SK-N-SH (cell line): ENCODE measurements at regions of chr3 and their contacts with region 1.

Region 1: GRCh38 chr3:14261229-14261628 is 82.6 kb downstream of the LSM3 start:
- DNase-seq: peak; percentile 88
- H3K4me3 ChIP-seq: peak overlapping the region in 1 of 2 experiments; percentile 42; a peak in 1 of 4 replicates
- H3K27ac ChIP-seq: no peak overlapping the region
- H3K4me1 ChIP-seq: no peaks in the 10 kb centered on the region
- H3K27me3 ChIP-seq: 0 out of 2 replicates have a peak, but pooled peaks cover 6% of the 10 kb centered on the region
- CTCF ChIP-seq: peak; percentile 98
- EP300 ChIP-seq: no peak
- RAD21 ChIP-seq: peak; percentile 99

Region 2: GRCh38 chr3:14274999-14275961 is 14.1 kb after region 1 on chr3:
- CTCF ChIA-PET with region 1: interaction called, 29 read pairs
- POLR2A ChIA-PET with region 1: no interaction called
- DNase-seq: peak; percentile 43
- H3K4me3 ChIP-seq: no peak overlapping the region; a peak in 1 of 4 replicates
- H3K27ac ChIP-seq: no peak overlapping the region
- H3K4me1 ChIP-seq: peaks cover 0 to 12% of the 10 kb centered on the region in 2 experiments; a peak in 2 of 4 replicates
- H3K27me3 ChIP-seq: 0 out of 2 replicates have a peak, but pooled peaks cover 3% of the 10 kb centered on the region
- CTCF ChIP-seq: peak; percentile 36
- EP300 ChIP-seq: no peak
- RAD21 ChIP-seq: peak; percentile 45

Region 3: DNA sequence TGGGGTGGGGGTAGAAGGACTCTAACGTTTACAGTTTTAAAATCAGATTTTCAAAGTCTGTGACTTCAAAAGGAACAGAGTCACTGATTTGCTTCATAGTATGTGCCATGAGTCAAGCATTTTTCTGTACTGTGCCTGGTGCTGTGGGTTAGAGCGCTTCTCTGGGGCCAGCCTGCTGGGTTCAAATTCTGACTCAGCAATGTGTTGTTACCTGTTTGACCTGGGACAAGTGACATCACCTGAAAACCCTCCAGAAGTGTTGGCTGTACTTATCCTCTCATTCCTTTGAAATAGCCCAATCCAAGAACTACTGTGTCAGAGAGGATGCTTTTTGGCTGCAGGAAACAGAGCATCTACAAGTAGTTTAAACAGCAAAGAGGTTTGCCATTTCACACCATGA is 19.1 kb after region 1 on chr3:
- CTCF ChIA-PET with region 1: interaction called, 29 read pairs
- POLR2A ChIA-PET with region 1: no interaction called
- DNase-seq: no peak
- H3K4me3 ChIP-seq: no peak overlapping the region
- H3K27ac ChIP-seq: no peak overlapping the region
- H3K4me1 ChIP-seq: peaks cover 0 to 12% of the 10 kb centered on the region in 2 experiments; a peak in 2 of 4 replicates
- H3K27me3 ChIP-seq: no peaks in the 10 kb centered on the region
- CTCF ChIP-seq: no peak
- EP300 ChIP-seq: no peak
- RAD21 ChIP-seq: no peak

Region 4: GRCh38 chr3:14307656-14308302 is 46.5 kb after region 1 on chr3:
- CTCF ChIA-PET with region 1: interaction called, 10 read pairs
- POLR2A ChIA-PET with region 1: no interaction called
- DNase-seq: no peak
- H3K4me3 ChIP-seq: no peak overlapping the region
- H3K27ac ChIP-seq: no peak overlapping the region
- H3K4me1 ChIP-seq: peaks cover 0 to 10% of the 10 kb centered on the region in 2 experiments; a peak in 1 of 4 replicates
- H3K27me3 ChIP-seq: peaks cover 7% of the 10 kb centered on the region
- CTCF ChIP-seq: no peak
- EP300 ChIP-seq: no peak
- RAD21 ChIP-seq: no peak

Region 5: GRCh38 chr3:14402304-14402811 is 141.1 kb after region 1 on chr3 and contains the start of gene SLC6A6:
- CTCF ChIA-PET with region 1: interaction called, 13 read pairs
- POLR2A ChIA-PET with region 1: no interaction called
- DNase-seq: peak; percentile 96
- H3K4me3 ChIP-seq: peak within 1 kb of the TSS; percentile 48 to 86
- H3K27ac ChIP-seq: peak within 1 kb of the TSS; percentile 84 to 91
- H3K4me1 ChIP-seq: peaks cover 13 to 24% of the 10 kb centered on the region in 2 experiments; a peak in 3 of 4 replicates
- H3K27me3 ChIP-seq: no peaks in the 10 kb centered on the region
- CTCF ChIP-seq: peak; percentile 42
- EP300 ChIP-seq: peak in 1 of 2 experiments; percentile 23; a peak in 1 of 4 replicates
- RAD21 ChIP-seq: peak; percentile 24; the same call in 1 of the 2 replicates
- polyA plus RNA-seq, gene SLC6A6: 19.1 and 22.0 TPM in 2 replicates

Region 6: GRCh38 chr3:14452679-14453367 is 191.6 kb after region 1 on chr3:
- CTCF ChIA-PET with region 1: interaction called, 51 read pairs
- POLR2A ChIA-PET with region 1: no interaction called
- DNase-seq: no peak
- H3K4me3 ChIP-seq: peak overlapping the region in 1 of 2 experiments; percentile 29; a peak in 2 of 4 replicates
- H3K27ac ChIP-seq: peak overlapping the region; percentile 72 to 97
- H3K4me1 ChIP-seq: peaks cover 9 to 24% of the 10 kb centered on the region in 2 experiments; a peak in 3 of 4 replicates
- H3K27me3 ChIP-seq: no peaks in the 10 kb centered on the region
- CTCF ChIP-seq: peak; percentile 23; the same call in 1 of the 2 replicates
- EP300 ChIP-seq: 0 out of 4 replicates have a peak, but pooled peaks of 1 of the 2 experiments have one; percentile 62
- RAD21 ChIP-seq: peak; percentile 14; the same call in 1 of the 2 replicates

Region 7: GRCh38 chr3:14461748-14462324 is 200.6 kb after region 1 on chr3:
- CTCF ChIA-PET with region 1: interaction called, 105 read pairs
- POLR2A ChIA-PET with region 1: no interaction called
- DNase-seq: peak; percentile 86
- H3K4me3 ChIP-seq: no peak overlapping the region
- H3K27ac ChIP-seq: peak overlapping the region in 1 of 2 experiments; percentile 76; a peak in 1 of 4 replicates
- H3K4me1 ChIP-seq: peaks cover 9 to 17% of the 10 kb centered on the region in 2 experiments; a peak in 3 of 4 replicates
- H3K27me3 ChIP-seq: no peaks in the 10 kb centered on the region
- CTCF ChIP-seq: peak; percentile 78
- EP300 ChIP-seq: no peak
- RAD21 ChIP-seq: peak; percentile 88

Region 8: DNA sequence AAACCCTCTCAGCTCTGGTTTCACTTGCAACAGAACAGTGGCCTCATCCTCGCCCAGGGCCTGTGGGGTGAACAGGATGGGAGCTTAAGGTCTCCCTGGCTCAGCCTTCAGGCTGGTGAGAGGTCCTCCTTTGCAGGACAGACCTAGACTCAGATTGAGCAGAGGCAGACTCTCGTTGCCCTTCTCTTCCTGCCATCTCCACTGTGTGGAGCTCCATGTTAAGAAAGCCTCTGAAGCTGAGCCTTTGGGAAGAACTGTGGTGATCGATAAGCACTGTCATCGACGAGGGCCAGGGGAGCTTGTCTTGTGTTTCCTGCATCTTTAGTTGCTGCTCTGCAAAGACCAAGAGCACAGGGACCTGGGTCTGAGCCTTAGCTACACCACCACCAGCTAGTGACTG is 316.7 kb after region 1 on chr3:
- CTCF ChIA-PET with region 1: no interaction called
- POLR2A ChIA-PET with region 1: no interaction called
- DNase-seq: no peak
- H3K4me3 ChIP-seq: no peak overlapping the region
- H3K27ac ChIP-seq: no peak overlapping the region
- H3K4me1 ChIP-seq: peaks cover 0 to 5% of the 10 kb centered on the region in 2 experiments; a peak in 1 of 4 replicates
- H3K27me3 ChIP-seq: no peaks in the 10 kb centered on the region; the same call in 1 of the 2 replicates
- CTCF ChIP-seq: no peak
- EP300 ChIP-seq: no peak
- RAD21 ChIP-seq: peak; percentile 23